ENCODE measurements at regions of chr15 and their contacts with region 1.

Region 1: DNA sequence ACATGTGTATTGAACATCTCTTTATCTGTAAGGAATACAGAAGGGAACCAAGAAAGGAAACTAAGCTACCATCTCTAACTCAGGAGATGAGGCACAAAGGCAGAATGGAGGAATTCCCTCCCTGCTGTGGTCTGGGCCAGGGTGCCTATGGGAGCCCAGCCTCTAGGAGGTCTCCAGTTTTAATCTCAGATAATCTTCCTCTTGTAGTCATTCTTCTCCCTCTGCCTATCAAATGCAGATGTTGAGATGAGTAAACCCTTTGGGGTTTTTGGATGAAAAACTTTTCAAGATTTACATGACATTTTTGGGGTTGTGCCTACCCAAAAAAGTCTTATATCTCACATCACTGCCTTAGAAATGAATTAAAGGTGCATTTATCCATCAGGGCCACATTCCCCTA is 23.3 kb downstream of the SCG5 start:
- DNase-seq: no peak
- H3K4me3 ChIP-seq: no peak overlapping the region
- H3K27me3 ChIP-seq: no peaks in the 10 kb centered on the region
- CTCF ChIP-seq: no peak

Region 2: DNA sequence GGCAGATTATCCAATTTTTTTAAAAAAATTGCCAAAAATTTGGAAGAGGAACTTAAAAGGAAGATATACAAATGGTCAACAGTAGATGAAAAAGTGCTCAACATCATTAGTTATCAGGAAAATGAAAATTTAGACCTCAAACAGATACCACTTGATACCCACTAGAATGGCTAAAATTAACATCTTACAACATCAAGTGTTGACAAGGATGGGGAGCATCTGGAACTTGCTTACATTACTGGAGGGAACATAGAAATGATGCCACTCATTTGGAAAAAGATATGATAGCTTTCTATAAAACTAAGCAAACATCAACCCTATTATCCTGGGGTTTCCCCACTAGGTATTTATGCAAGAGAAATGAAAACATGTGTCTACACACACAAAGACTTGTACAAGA is 919.0 kb before region 1 on chr15:
- CTCF ChIA-PET with region 1: no interaction called
- POLR2A ChIA-PET with region 1: no interaction called
- DNase-seq: no peak
- H3K4me3 ChIP-seq: no peak overlapping the region
- H3K27me3 ChIP-seq: no peaks in the 10 kb centered on the region
- CTCF ChIP-seq: no peak

Region 3: DNA sequence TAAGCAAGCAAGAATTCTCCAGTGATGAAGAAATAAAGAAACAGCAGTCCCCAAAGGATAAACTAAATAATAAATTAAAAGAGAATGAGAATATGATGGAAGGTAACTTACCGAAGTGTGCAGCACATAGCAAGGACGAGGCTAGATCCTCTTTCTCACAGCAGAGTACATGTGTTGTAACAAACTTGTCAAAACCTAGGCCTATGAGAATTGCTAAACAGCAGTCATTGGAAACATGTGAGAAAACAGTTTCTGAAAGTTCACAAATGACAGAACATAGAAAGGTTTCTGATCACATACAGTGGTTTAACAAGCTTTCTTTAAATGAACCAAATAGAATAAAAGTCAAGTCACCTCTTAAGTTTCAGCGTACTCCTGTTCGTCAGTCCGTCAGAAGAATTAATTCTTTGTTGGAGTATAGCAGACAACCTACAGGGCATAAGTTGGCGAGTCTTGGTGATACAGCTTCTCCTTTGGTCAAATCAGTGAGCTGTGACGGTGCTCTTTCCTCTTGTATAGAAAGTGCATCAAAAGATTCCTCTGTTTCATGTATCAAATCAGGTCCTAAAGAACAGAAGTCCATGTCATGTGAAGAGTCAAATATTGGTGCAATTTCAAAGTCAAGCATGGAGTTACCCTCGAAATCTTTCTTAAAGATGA is 27.8 kb before region 1 on chr15:
- CTCF ChIA-PET with region 1: no interaction called
- POLR2A ChIA-PET with region 1: no interaction called
- DNase-seq: no peak
- H3K4me3 ChIP-seq: no peak overlapping the region
- H3K27me3 ChIP-seq: no peaks in the 10 kb centered on the region
- CTCF ChIP-seq: no peak

Region 4: DNA sequence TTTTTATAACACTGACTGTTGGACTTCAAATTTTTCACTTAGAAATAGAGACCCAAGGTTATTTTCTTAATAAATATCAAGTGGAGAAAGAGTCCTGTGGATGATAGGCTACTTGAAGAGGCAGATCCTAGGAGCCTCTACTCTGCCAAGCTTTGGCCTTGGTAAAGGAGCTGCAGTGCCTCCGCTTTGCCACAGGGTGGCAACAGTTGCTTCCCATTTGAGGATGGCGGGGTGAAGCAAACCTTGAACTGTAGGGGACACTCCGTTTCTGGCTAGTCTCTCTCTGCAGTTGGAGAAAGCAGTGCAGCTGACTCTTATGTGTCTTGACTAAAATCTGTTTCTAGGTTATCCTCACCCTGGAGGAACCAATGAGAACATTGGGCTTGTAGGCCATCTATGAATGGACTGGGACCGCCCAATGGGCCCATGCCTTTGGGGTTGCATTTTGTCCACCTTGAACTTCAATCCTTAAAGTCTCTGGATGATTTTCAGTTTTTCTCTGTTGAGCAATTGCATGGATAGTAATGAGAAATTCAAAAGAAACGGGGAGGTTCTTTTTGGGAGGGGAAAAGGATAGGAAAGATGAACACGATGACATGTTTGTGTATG is 13.5 kb before region 1 on chr15:
- CTCF ChIA-PET with region 1: interaction called, 52 read pairs
- POLR2A ChIA-PET with region 1: no interaction called
- DNase-seq: no peak
- H3K4me3 ChIP-seq: no peak overlapping the region
- H3K27me3 ChIP-seq: no peaks in the 10 kb centered on the region; the same call in 1 of the 2 replicates
- CTCF ChIP-seq: peak; percentile 98

Region 5: DNA sequence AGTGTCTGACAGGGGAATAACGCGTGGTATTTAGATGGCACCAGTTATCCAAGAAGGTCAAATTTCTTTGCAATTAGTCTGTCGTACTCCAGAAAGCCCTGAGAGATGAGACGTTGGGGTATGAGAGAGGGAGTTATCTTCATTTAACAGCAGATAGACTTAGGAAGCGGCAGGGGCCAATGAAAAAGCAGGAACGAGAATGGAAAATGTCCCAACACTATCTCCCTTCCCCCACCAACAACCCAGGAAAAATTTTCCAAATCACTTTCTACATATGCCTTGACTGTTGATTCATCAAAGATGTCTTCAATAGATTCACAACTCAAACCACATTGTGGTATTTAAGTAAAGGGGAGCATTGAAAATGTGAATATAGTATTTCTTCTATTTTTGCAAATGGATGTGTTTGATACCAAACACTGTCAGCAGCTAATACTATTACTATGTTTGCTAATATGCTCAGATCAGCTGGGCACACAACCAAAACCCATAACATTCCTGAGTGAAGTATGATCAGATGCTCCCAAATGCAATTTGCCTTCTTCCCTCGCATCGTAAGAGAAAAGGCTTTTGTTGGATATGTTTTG is 39.7 kb after region 1 on chr15:
- CTCF ChIA-PET with region 1: interaction called, 15 read pairs
- POLR2A ChIA-PET with region 1: no interaction called
- DNase-seq: peak; percentile 76
- H3K4me3 ChIP-seq: no peak overlapping the region
- H3K27me3 ChIP-seq: no peaks in the 10 kb centered on the region
- CTCF ChIP-seq: no peak

Region 6: GRCh38 chr15:32717426-32718226 is 52.8 kb after region 1 on chr15 and contains the start of gene GREM1:
- CTCF ChIA-PET with region 1: interaction called, 24 read pairs
- POLR2A ChIA-PET with region 1: interaction called, 7 read pairs
- DNase-seq: no peak
- H3K4me3 ChIP-seq: peak within 1 kb of the TSS; percentile 92
- H3K27me3 ChIP-seq: no peaks in the 10 kb centered on the region
- CTCF ChIP-seq: no peak
- polyA plus RNA-seq, gene GREM1: 2,051 and 2,694 TPM in 2 replicates

Region 7: GRCh38 chr15:32736005-32736700 is 71.4 kb after region 1 on chr15:
- CTCF ChIA-PET with region 1: interaction called, 13 read pairs
- POLR2A ChIA-PET with region 1: no interaction called
- DNase-seq: no peak
- H3K4me3 ChIP-seq: no peak overlapping the region
- H3K27me3 ChIP-seq: no peaks in the 10 kb centered on the region
- CTCF ChIP-seq: no peak

Region 8: GRCh38 chr15:32844118-32844711 is 179.4 kb after region 1 on chr15:
- CTCF ChIA-PET with region 1: interaction called, 31 read pairs
- POLR2A ChIA-PET with region 1: interaction called, 3 read pairs
- DNase-seq: no peak
- H3K4me3 ChIP-seq: no peak overlapping the region
- H3K27me3 ChIP-seq: no peaks in the 10 kb centered on the region
- CTCF ChIP-seq: peak; percentile 64

Region 9: GRCh38 chr15:32956006-32956405 is 291.2 kb after region 1 on chr15:
- CTCF ChIA-PET with region 1: interaction called, 22 read pairs
- POLR2A ChIA-PET with region 1: no interaction called
- DNase-seq: peak; percentile 31
- H3K4me3 ChIP-seq: no peak overlapping the region
- H3K27me3 ChIP-seq: no peaks in the 10 kb centered on the region
- CTCF ChIP-seq: peak; percentile 75